HepG2 (cell line): ENCODE measurements at regions of chr2 and their contacts with region 1.

Region 1: DNA sequence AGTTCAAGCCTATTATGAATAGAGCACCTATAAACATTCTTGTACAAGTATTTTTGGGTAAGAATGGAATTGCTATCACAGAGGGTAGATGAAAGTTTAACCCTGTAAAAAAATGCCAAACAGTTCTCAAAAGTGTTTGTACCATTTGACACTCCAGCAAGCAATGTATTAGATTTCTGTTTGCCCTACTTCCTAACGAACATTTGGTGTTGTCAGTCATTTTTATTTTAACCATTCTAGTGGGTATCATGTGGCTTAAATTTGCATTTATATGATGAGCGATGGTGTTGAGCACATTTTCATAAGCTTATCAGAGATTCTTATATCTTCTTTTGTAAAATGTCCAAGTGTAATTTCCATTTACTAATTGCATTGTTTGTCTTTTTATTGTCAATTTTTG is 608.2 kb upstream of the ACVR2A start:
- DNase-seq: no peak
- ATAC-seq: no peak
- H3K4me3 ChIP-seq: no peak overlapping the region
- H3K27ac ChIP-seq: no peak overlapping the region
- H3K4me1 ChIP-seq: no peaks in the 10 kb centered on the region
- H3K27me3 ChIP-seq: no peaks in the 10 kb centered on the region
- CTCF ChIP-seq: no peak
- EP300 ChIP-seq: no peak
- POLR2A ChIP-seq: no peak
- RAD21 ChIP-seq: no peak

Region 2: GRCh38 chr2:146785101-146785500 is 451.5 kb before region 1 on chr2:
- CTCF ChIA-PET with region 1: no interaction called
- POLR2A ChIA-PET with region 1: no interaction called
- in situ Hi-C with region 1: no loop called
- intact Hi-C with region 1: loop called (anchors 5 kb)
- DNase-seq: no peak
- ATAC-seq: no peak
- H3K4me3 ChIP-seq: no peak overlapping the region
- H3K27ac ChIP-seq: no peak overlapping the region
- H3K4me1 ChIP-seq: no peaks in the 10 kb centered on the region
- H3K27me3 ChIP-seq: no peaks in the 10 kb centered on the region
- CTCF ChIP-seq: no peak
- EP300 ChIP-seq: no peak
- POLR2A ChIP-seq: no peak
- RAD21 ChIP-seq: no peak

Region 3: DNA sequence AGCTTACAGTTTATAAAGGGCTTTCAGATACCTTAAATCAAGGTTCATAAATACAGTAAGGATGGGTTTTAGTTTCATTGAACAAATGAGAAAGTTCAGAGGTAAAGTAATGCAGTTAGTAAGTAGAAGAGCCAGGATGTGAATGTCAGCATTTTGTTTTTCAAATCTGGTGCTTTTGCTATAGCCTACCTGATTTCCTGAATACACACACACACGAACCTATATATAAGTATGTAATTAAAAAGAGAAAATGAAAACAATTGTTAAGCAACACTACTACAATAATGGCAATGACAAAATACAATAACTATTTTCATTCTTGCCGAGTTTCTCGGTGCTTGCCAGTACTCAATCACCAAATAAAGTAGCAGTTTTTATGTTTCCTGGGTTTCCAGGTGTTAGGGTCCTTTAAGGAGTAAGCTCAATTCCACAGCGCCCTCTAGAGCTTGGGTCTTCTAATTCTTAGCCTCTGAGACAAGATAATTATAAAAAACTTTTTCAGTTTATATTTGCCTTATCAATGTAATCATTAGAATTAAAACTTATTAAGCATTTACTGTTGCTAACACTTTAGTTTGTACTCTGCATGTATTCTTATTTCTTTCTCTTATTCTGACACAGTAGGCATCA is 95.3 kb after region 1 on chr2:
- CTCF ChIA-PET with region 1: no interaction called
- POLR2A ChIA-PET with region 1: no interaction called
- in situ Hi-C with region 1: no loop called
- intact Hi-C with region 1: no loop called
- DNase-seq: peak; percentile 5
- ATAC-seq: peak; percentile 40; the same call in 1 of the 3 replicates
- H3K4me3 ChIP-seq: no peak overlapping the region
- H3K27ac ChIP-seq: no peak overlapping the region
- H3K4me1 ChIP-seq: no peaks in the 10 kb centered on the region
- H3K27me3 ChIP-seq: no peaks in the 10 kb centered on the region
- CTCF ChIP-seq: 0 out of 2 replicates have a peak, but pooled peaks have one; percentile 24
- EP300 ChIP-seq: no peak
- POLR2A ChIP-seq: no peak
- RAD21 ChIP-seq: no peak